ENCODE measurements at regions of chr2 and their contacts with region 1.

Region 1: DNA sequence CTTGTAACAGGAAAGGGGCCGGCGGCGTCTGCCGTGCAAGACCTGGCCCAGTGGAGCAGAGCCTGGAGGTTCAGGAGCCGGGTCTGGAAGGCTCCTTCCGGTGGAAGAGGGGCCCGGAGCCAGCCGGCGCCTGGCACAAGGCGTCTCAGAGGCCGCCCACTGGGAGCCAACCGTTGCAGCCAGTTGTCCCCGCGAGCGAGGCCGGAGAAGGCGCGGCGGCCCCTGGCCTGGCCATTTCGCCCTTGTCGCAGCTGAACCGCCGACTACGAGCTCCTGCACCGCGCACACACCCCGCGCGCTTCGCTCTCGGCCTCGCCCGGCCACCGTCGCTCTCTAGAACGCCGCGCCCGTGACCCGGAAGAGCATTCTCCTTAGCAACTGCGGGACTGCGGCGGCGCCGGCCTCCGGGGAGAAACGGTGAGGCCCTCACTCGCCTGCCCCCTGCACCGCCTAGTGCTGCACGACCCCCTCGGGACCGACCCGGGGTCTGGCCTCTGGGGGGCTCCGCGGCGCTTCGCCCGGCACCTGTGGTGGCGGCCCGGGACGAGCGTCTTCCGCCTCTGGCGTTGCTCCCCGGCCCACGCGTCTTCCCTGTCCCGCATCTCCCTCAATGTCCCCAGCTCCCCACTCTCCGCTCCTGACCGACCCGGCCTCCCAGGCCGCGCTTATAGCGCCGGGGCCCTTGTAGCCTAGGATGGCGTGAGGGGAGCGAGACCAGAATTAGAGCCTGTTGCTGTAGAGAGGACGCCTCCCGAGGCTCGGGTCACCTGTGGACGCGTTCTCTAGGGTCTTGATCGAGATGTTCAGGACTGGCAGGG is at the start of gene DIS3L2:
- DNase-seq: no peak
- ATAC-seq: peak; percentile 99
- H3K4me3 ChIP-seq: peak within 1 kb of the TSS; percentile 87 to 98
- H3K27ac ChIP-seq: peak within 1 kb of the TSS; percentile 92
- H3K4me1 ChIP-seq: peaks cover 4% of the 10 kb centered on the region; the same call in 1 of the 2 replicates
- H3K27me3 ChIP-seq: no peaks in the 10 kb centered on the region
- CTCF ChIP-seq: no peak
- total RNA-seq, gene DIS3L2: 28.1 TPM

Region 2: DNA sequence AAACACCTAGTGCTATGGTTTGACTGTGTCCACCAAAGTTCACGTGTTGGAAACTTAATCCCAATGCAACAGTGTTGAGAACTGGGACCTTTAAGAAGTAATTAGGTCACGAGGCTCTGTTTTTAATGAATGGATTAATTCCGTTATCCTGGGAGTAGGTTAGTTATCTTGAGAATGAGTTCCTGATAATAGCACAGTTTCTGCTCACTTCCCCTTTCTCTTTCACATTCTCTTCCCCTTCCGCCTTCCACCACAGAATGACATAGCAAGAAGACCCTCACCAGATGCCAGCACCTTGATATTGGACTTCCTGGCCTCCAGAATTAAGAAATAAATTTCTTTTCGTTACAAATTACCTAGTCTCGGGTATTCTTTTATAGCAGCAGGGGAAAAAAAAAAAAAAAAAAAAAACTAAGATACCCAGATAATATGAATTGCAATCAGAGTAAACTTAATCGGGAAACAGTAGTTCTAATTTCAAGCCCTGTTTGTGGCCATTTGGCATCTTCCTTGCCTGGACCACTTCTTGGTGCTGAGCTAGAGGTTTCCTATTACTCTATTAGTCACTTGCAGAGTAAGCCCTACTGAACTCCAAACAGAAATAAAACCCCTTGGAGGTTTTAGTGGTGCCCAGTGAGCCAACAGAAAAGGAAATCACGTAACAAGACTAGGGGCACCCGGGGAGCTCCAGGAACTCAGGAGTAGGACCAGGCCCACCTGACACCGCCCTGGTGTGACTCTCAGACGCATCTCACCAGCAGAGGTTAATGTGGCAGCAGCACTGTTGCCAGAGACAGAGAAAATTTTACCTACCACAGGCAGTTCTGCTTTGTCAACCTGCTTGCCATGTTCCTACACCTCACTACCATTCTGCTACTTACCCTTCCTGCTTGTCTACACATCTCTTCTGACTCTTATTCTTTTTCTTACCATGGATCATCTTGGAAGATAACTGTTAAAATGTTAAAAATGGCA is 1396.5 kb before region 1 on chr2:
- CTCF ChIA-PET with region 1: interaction called, 11 read pairs
- POLR2A ChIA-PET with region 1: no interaction called
- in situ Hi-C with region 1: no loop called
- intact Hi-C with region 1: no loop called
- DNase-seq: no peak
- ATAC-seq: no peak
- H3K4me3 ChIP-seq: no peak overlapping the region
- H3K27ac ChIP-seq: no peak overlapping the region
- H3K4me1 ChIP-seq: no peaks in the 10 kb centered on the region
- H3K27me3 ChIP-seq: no peaks in the 10 kb centered on the region; the same call in 1 of the 2 replicates
- CTCF ChIP-seq: no peak

Region 3: DNA sequence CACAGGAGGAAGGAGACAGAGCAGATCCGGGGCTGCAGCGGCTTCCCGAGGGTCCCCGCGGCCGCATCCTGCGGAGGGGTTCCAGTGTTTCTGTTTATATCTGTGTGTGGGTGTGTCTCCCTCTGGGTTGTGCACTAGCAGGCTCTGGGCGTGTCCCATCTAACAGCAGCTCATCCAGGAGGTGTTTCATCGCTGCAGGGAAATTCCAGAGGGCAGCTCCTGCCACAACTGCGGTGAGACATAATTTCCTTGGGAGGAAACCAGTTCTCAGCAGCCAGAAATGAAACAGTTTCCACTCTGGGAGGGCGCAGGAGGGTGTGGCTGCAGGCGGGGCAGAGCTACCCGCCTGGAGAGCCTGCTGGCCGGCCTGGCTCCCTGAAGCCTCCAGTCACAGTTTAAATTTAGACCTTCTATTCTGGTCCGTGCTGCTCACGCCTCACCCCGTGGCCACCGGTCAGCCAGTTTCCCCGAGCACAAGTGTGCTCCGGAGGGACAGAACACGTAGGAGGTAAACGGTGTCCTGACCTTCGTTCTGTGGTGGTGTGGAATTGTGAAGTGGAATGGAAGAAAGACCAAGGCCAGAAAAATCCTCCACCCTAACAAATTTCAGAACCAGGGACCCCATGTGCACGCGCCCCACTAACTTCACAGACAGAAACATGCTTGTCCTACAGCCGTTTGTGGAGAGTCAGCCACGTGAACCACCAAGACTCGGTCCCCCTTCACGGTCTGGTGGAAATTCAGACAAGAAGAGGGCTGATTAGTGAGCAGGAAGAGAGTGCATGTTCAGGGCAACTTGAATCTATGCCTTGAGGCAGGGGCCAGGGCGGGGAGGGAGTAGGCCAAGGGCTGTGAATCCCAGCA is 318.7 kb before region 1 on chr2:
- CTCF ChIA-PET with region 1: no interaction called
- POLR2A ChIA-PET with region 1: no interaction called
- in situ Hi-C with region 1: no loop called
- intact Hi-C with region 1: no loop called
- DNase-seq: peak; percentile 88
- ATAC-seq: peak; percentile 94
- H3K4me3 ChIP-seq: peak overlapping the region; percentile 24 to 48; a peak in 3 of 4 replicates
- H3K27ac ChIP-seq: peak overlapping the region; percentile 91
- H3K4me1 ChIP-seq: peaks cover 39% of the 10 kb centered on the region
- H3K27me3 ChIP-seq: no peaks in the 10 kb centered on the region
- CTCF ChIP-seq: no peak

Region 4: DNA sequence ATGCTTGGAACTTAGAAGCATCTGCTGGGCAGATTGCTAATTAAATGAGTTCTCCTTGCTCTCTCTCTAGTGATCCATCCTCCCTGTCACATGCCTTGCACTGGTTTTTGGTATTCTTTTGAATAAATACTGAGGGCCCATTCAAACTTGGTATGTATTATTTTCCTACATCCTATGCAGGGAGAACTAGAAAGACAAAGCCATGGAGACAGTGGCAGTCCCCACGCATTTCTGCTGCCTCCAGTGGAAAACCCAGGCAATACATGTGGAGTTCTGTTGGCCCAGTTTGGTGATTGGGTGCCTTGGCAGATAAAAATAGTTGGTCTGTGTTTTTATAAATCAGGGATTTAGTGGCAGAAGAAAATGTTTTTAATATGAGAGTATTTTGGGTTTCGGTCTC is 68.7 kb after region 1 on chr2:
- CTCF ChIA-PET with region 1: no interaction called
- POLR2A ChIA-PET with region 1: interaction called, 11 read pairs
- in situ Hi-C with region 1: no loop called
- intact Hi-C with region 1: no loop called
- DNase-seq: no peak
- ATAC-seq: no peak
- H3K4me3 ChIP-seq: no peak overlapping the region
- H3K27ac ChIP-seq: no peak overlapping the region
- H3K4me1 ChIP-seq: no peaks in the 10 kb centered on the region
- H3K27me3 ChIP-seq: no peaks in the 10 kb centered on the region
- CTCF ChIP-seq: peak; percentile 55